Right ventricle myocardium inferior (tissue), 1 donor: ENCODE measurements at regions of chr16 and their contacts with region 1.

Region 1: DNA sequence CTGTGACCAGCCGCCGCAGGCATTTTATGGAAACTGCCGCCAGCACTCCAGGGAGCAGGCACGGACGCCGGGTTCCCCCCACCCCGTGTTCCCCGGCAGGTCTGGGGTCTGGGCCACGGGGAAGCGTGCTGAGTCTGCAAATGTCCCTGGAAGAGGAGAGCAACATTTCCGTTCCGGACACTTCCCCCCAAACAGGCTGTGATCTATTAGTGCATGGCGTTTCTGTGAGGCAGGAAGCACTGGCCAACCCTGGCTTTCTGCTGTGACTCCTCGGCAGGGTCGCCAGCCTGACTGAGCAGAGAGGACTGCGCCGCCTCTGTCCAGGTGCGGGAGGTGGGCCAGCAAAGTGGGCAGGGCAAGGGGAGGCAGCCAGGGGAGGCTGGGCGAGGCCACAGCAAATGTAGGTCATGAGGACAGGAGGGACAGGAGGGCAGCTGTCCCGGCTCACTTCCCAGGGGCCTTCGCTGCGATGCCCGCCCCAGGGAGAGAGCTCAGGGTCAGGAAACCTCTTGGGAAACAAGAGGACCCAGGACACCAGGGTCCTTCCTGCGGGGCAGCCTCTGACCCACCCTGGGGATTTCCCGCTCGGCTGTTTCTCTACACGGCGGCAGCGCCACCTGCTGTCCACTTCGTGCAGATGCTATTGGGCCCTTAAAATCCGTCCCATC is 9.5 kb downstream of the FOXF1 start:
- DNase-seq: peak; percentile 84
- ATAC-seq: peak; percentile 44

Region 2: GRCh38 chr16:86072328-86073102 is 447.3 kb before region 1 on chr16:
- intact Hi-C with region 1: loop called (anchors 1 kb)
- DNase-seq: peak; percentile 70
- ATAC-seq: no peak

Region 3: GRCh38 chr16:86252596-86252995 is 267.2 kb before region 1 on chr16:
- intact Hi-C with region 1: loop called (anchors 5 kb)
- DNase-seq: no peak
- ATAC-seq: no peak

Region 4: GRCh38 chr16:86343027-86343787 is 176.6 kb before region 1 on chr16:
- intact Hi-C with region 1: loop called (anchors 2 kb)
- DNase-seq: no peak
- ATAC-seq: no peak

Region 5: GRCh38 chr16:86436466-86437185 is 83.2 kb before region 1 on chr16:
- intact Hi-C with region 1: no loop called
- DNase-seq: no peak
- ATAC-seq: no peak